Aorta (tissue), 5 donors: ENCODE measurements at regions of chr7 and their contacts with region 1.

Region 1: DNA sequence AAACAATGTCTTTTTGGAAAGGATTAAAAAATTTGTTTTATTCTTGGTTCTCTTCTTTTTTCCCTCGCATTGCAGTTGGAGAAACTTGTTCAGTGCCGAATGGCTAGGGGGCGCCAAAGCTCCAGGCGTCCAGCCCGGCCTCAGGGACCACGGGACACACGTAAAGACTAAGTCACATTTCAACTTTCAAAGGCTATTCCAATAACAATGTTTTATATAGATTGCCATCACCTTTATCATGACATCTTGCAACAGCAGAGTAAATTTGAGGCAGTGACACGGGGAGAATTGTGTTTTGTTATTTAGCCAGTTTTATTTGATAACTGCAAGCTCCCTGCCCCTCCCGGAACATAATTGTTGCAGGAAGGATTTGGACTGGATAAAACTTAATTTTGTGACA is 2.2 kb upstream of the IGFBP3 start:
- DNase-seq: peak; percentile 86 to 94
- ATAC-seq: peak; percentile 82
- H3K4me3 ChIP-seq: peak overlapping the region in 1 of 2 donors; percentile 39
- H3K27ac ChIP-seq: no peak overlapping the region
- H3K4me1 ChIP-seq: peaks cover 0 to 4% of the 10 kb centered on the region in 2 donors
- H3K27me3 ChIP-seq: no peaks in the 10 kb centered on the region

Region 2: DNA sequence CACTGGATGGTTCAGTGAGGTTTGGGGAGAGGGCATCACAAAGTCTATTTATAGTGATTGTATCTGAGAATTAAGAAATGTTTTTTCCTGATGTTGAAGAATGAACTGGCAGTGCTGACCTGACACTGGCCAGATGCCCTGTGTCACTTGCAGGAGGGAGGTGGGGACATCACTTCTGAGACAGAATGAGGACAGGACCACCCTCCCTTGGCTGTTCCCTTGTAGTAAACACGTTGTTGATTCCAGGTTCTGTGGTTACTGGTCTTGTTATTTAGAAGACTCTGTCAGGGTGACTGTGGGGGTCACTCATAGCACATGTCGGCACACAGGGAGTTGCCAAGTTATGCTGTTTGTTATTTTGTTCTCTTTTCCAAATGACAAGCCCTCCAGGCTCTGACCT is 222.7 kb before region 1 on chr7:
- intact Hi-C with region 1: no loop called
- DNase-seq: no peak
- ATAC-seq: no peak
- H3K4me3 ChIP-seq: no peak overlapping the region
- H3K27ac ChIP-seq: no peak overlapping the region
- H3K4me1 ChIP-seq: no peaks in the 10 kb centered on the region
- H3K27me3 ChIP-seq: no peaks in the 10 kb centered on the region

Region 3: DNA sequence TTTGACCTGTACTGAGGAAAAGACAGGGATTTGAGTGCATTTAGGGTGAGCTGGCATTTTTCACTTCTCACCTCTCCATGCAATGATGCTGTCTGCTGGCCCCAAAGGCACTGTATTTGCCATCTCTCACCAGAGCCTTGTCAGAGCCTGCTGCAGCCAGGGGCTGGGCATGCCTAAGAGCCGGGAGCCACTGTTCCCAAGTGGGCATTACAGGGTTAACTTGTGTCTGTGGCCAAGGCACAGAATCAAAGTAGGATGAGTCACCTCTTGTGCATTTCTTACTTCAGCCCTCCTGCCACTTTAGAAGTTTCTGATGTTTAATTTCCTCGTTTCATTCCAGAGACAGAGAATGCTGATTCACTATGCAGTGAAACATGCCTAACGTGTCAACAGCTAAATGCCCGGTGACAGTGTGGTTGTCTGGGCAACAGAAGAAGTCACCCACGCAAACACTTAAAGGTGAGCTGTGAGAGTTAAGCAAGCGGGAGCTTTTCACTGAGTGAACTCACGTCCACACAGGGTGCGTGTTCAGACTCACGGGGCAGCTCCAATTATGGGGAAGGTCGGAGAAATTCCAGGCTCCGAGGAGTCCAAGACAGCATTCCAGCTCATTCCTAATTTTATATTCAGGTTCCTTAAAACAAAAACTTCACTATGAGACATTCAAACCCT is 54.9 kb after region 1 on chr7:
- intact Hi-C with region 1: loop called in 1 of 2 experiments (anchors 1 kb)
- DNase-seq: peak in 1 of 2 donors; percentile 72
- ATAC-seq: peak; percentile 51
- H3K4me3 ChIP-seq: no peak overlapping the region
- H3K27ac ChIP-seq: peak overlapping the region; percentile 85 to 92
- H3K4me1 ChIP-seq: peaks cover 2 to 9% of the 10 kb centered on the region in 2 donors
- H3K27me3 ChIP-seq: no peaks in the 10 kb centered on the region

Region 4: GRCh38 chr7:46291064-46291463 is 367.8 kb after region 1 on chr7:
- intact Hi-C with region 1: loop called in 1 of 2 experiments (anchors 10 kb)
- DNase-seq: no peak
- ATAC-seq: no peak
- H3K4me3 ChIP-seq: no peak overlapping the region
- H3K27ac ChIP-seq: no peak overlapping the region
- H3K4me1 ChIP-seq: peaks cover 0 to 4% of the 10 kb centered on the region in 2 donors
- H3K27me3 ChIP-seq: no peaks in the 10 kb centered on the region

Region 5: DNA sequence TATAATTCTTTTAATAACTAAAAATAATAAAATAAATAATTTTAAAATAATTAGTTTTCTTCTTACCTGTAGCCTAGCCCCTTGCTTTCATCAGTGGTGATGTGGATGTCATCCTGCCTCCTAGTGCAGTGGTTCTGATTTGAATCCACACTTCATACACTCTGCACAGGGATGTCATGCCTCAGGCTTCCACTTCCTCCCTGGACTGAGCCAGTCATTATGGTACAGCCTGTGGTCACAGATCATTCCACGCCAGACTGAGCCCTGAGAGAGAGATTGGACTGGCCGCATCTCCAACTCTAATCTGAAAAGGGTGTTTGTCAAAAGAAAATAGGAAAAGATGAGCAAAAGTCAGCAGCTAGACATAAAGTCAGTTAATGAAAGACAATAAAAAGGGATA is 434.0 kb after region 1 on chr7:
- intact Hi-C with region 1: loop called (anchors 1 to 2 kb)
- DNase-seq: no peak
- ATAC-seq: no peak
- H3K4me3 ChIP-seq: no peak overlapping the region
- H3K27ac ChIP-seq: no peak overlapping the region
- H3K4me1 ChIP-seq: no peaks in the 10 kb centered on the region
- H3K27me3 ChIP-seq: no peaks in the 10 kb centered on the region

Region 6: GRCh38 chr7:47088329-47089067 is 1165.2 kb after region 1 on chr7:
- intact Hi-C with region 1: loop called (anchors 2 kb)
- DNase-seq: peak; percentile 57 to 78
- ATAC-seq: peak; percentile 89
- H3K4me3 ChIP-seq: no peak overlapping the region
- H3K27ac ChIP-seq: no peak overlapping the region
- H3K4me1 ChIP-seq: no peaks in the 10 kb centered on the region
- H3K27me3 ChIP-seq: no peaks in the 10 kb centered on the region